ENCODE measurements at regions of chr11 and their contacts with region 1.

Region 1: GRCh38 chr11:43825217-43825816 is 55.3 kb upstream of the ALKBH3 start:
- DNase-seq: no peak
- H3K4me3 Mint-ChIP-seq: no peak overlapping the region
- H3K27ac Mint-ChIP-seq: no peak overlapping the region
- H3K4me1 Mint-ChIP-seq: peaks cover 2% of the 10 kb centered on the region
- H3K27me3 Mint-ChIP-seq: no peaks in the 10 kb centered on the region

Region 2: GRCh38 chr11:43845816-43846215 is 20.5 kb after region 1 on chr11:
- CTCF ChIA-PET with region 1: interaction called, 105 read pairs
- POLR2A ChIA-PET with region 1: no interaction called
- intact Hi-C with region 1: no loop called
- DNase-seq: no peak
- H3K4me3 Mint-ChIP-seq: no peak overlapping the region
- H3K27ac Mint-ChIP-seq: no peak overlapping the region
- H3K4me1 Mint-ChIP-seq: no peaks in the 10 kb centered on the region
- H3K27me3 Mint-ChIP-seq: no peaks in the 10 kb centered on the region

Region 3: GRCh38 chr11:44095506-44096394 is 270.4 kb after region 1 on chr11 and contains the start of gene EXT2:
- CTCF ChIA-PET with region 1: no interaction called
- POLR2A ChIA-PET with region 1: no interaction called
- intact Hi-C with region 1: no loop called
- DNase-seq: peak; percentile 90
- H3K4me3 Mint-ChIP-seq: peak within 1 kb of the TSS; percentile 83
- H3K27ac Mint-ChIP-seq: no peak within 1 kb of the TSS
- H3K4me1 Mint-ChIP-seq: peaks cover 26% of the 10 kb centered on the region
- H3K27me3 Mint-ChIP-seq: no peaks in the 10 kb centered on the region
- total RNA-seq, gene EXT2: 27.0 to 28.1 TPM